Right ventricle myocardium inferior (tissue), 1 donor: ENCODE measurements at regions of chr1 and their contacts with region 1.

Region 1: DNA sequence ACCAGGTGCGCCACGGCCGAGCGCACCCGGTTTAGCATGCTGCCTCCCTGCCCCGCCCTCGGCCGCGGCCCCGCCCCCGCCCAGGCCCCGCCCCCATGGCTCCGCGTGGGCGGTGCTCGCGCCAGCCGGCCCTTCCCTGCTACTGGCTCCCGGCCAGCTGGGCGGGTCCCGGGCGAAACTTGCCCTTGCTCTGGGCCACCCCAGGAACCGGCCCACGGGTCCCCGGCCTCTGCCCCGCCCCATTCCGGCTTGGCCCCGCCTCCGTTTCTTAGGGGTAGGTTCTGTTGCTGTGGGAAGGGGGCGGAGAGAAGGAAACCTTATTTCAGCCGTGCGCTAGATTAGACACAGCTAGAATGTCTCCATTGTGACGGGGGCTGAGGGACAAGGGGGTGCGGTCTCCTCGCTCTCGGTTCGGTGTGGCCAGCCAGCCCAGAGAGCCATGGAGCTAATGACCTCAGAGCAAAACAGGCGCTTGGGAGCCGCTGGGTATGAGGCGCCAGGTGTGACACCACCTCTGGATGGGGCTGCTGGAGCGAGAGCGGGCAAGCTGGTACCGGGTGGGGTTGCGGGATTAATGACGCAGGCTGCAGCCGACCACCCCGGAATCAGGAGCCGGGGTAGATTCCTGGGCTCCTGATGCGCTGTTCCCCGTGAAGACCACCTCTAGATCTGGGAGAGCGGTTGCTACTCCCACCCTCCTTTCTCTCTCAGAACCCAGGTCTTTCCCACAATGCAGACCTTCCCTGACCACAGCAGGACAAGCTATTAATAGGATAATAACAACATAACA is at the start of gene PPM1J:
- DNase-seq: peak; percentile 99
- ATAC-seq: peak; percentile 89
- total RNA-seq, gene PPM1J: 5.3 TPM

Region 2: DNA sequence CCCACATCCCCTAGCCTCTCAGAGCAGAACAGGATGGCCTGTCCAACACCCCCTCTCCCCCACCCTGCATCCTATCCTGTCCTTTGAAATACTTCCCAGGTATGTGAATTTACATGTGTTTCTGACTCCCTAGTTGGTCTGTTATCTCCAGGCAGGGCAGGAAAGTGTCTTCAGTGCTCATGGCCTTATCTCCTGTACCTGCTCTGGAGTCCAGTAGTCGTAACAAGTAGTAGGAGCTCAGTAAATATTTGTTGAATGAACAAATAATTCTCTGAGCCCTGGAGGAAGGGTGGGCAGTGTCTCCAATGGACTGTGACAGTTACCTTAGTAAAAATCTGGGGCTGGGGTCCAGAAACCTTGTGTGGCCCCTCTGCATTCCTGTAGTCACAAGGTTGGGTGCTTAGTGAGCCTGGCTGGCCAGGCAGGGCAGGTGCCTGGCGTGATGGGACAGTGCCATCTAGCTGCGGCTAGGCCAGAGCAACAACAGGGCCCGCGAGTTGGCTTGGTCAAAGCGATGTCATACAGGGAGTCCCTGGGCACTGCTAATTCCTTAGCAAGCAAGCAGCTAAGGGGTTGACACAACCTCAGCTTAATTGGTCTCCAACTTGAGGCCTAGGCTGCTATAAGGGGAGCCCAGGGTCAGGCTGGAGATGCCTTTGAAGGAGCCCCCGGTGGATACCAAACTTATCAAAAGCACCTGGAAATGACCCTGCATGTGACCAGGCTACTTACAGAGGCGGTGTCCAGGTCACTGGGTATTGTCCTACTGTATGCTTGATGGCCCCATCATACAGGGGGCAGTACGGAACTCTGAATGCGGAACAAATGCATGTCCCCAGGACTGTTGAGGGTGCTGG is 88.7 kb after region 1 on chr1:
- intact Hi-C with region 1: loop called (anchors 1 kb)
- DNase-seq: no peak
- ATAC-seq: peak; percentile 77

Region 3: GRCh38 chr1:113072757-113073478 is 357.5 kb after region 1 on chr1 and contains the start of gene LRIG2:
- intact Hi-C with region 1: loop called (anchors 1 kb)
- DNase-seq: peak; percentile 100
- ATAC-seq: peak; percentile 100
- total RNA-seq, gene LRIG2: 7.8 TPM